HEK293 (cell line): ENCODE measurements at regions of chr4 and their contacts with region 1.

Region 1: GRCh38 chr4:111937368-111937767 is 207.9 kb upstream of the FAM241A start:
- H3K4me3 ChIP-seq: no peak overlapping the region
- H3K27ac ChIP-seq: no peak overlapping the region
- H3K4me1 ChIP-seq: no peaks in the 10 kb centered on the region
- CTCF ChIP-seq: no peak

Region 2: GRCh38 chr4:111641955-111642579 is 295.3 kb before region 1 on chr4:
- CTCF ChIA-PET with region 1: interaction called, 11 read pairs
- POLR2A ChIA-PET with region 1: no interaction called
- H3K4me3 ChIP-seq: no peak overlapping the region
- H3K27ac ChIP-seq: no peak overlapping the region
- H3K4me1 ChIP-seq: no peaks in the 10 kb centered on the region
- CTCF ChIP-seq: peak; percentile 69